ENCODE measurements at regions of chrX and their contacts with region 1.

Region 1: DNA sequence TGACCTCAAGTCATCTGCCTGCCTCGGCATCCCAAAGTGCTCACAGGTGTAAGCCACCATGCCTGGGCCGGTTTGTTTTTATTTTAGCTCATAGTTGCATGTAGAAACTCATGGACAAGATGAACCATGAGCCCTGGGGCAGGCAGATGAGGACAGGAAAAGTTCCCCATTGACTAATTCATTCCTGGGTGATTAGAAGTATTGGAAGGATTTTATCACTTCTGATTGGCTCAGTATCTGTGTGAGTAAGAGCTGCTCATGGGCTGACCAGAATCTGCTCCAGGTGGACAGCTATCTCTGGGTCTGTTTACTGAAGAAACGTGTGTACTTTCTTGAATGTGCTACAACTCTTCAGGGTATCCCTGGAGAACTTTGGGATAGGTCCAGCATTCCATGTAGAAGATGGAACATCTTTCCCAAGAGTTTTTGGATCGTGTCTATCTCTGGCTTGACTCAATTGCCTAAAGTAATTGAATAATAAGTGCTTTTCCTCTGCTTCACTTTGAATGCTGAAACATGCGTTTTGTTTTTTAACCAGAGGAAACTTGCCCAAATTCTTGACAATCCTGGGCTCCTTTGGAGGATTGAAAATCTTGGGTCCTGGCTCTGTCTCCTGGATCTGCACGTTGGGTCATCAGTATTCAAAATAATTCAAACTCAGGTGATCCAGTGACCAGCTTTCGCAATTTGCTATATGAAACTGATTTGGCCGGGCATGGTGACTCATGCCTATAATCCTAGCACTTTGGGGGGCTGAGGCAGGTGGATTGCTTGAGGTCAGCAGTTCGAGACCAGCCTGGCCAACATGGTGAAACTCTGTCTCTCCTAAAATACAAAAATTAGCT is 88.6 kb upstream of the DHRSX start:
- DNase-seq: no peak
- ATAC-seq: no peak
- H3K4me3 ChIP-seq: no peak overlapping the region
- H3K4me3 Mint-ChIP-seq: no peak overlapping the region
- H3K27ac ChIP-seq: no peak overlapping the region
- H3K27ac Mint-ChIP-seq: no peak overlapping the region
- H3K4me1 ChIP-seq: peaks cover 4% of the 10 kb centered on the region
- H3K4me1 Mint-ChIP-seq: peaks cover 18 to 21% of the 10 kb centered on the region in 2 donors
- H3K27me3 ChIP-seq: peaks cover 5% of the 10 kb centered on the region
- H3K27me3 Mint-ChIP-seq: peaks cover 6 to 7% of the 10 kb centered on the region in 2 donors
- CTCF ChIP-seq: no peak

Region 2: GRCh38 chrX:1323315-1323714 is 1266.1 kb before region 1 on chrX:
- intact Hi-C with region 1: loop called (anchors 5 kb)
- DNase-seq: peak; percentile 29 to 76
- ATAC-seq: peak; percentile 64 to 89 (median 70)
- H3K4me3 ChIP-seq: no peak overlapping the region
- H3K4me3 Mint-ChIP-seq: no peak overlapping the region
- H3K27ac ChIP-seq: no peak overlapping the region
- H3K27ac Mint-ChIP-seq: no peak overlapping the region
- H3K4me1 ChIP-seq: peaks cover 8% of the 10 kb centered on the region
- H3K4me1 Mint-ChIP-seq: no peaks in the 10 kb centered on the region
- H3K27me3 ChIP-seq: no peaks in the 10 kb centered on the region
- H3K27me3 Mint-ChIP-seq: peaks cover 0 to 3% of the 10 kb centered on the region in 2 donors
- CTCF ChIP-seq: peak; percentile 34